ENCODE measurements at regions of chr13 and their contacts with region 1.

Region 1: DNA sequence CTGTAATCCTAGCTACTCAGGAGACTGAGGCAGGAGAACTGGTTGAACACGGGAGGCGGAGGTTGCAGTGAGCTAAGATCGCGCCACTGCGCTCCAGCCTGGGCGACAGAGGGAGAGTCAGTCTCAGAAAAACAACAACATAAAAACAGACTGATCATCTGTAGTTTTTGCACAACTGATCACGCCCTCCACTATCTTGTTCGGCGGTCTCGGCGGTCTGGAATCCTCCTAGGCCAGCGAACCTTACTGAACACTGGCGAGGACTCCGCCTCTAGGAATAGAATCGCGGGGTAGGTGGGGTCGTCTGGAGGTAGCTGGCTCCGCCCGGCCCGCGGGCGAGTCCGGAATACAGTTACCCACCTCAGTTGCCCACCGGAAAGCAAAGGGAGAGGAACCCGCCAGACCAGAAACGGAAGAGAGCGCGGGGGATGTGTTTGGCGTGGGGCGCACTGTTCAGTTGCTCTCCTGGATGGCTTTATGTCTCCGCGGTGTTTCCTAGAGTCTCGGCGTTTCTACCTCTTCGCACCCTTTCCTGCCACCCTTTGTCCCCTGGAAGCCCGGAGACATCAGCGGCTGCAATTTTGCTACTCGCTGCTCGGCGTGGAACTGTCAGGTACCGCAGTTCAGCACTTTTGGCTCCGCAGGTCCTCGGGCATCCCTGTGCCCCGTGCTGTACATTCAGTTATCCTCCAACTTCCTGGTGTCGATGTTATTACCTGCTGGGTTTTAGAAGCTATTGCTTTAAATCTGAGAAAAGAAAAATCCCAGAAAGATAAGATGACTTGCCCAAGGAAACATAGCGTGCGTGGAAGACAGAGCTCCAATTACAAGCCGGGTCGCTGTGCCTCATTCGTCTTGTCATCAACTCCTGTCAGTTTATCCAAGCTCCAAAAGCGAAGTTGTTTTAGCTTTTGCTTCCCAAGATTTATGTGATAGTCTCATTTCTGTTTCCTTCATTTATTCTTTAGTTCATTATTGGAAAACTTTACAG is 24.9 kb upstream of the HNRNPA1L2 start:
- DNase-seq: peak; percentile 89
- H3K4me3 ChIP-seq: peak overlapping the region; percentile 68
- H3K4me3 Mint-ChIP-seq: peak overlapping the region; percentile 100
- H3K27ac Mint-ChIP-seq: peak overlapping the region; percentile 87
- H3K4me1 ChIP-seq: no peaks in the 10 kb centered on the region
- H3K4me1 Mint-ChIP-seq: no peaks in the 10 kb centered on the region
- H3K27me3 ChIP-seq: no peaks in the 10 kb centered on the region
- H3K27me3 Mint-ChIP-seq: no peaks in the 10 kb centered on the region
- CTCF ChIP-seq: no peak

Region 2: DNA sequence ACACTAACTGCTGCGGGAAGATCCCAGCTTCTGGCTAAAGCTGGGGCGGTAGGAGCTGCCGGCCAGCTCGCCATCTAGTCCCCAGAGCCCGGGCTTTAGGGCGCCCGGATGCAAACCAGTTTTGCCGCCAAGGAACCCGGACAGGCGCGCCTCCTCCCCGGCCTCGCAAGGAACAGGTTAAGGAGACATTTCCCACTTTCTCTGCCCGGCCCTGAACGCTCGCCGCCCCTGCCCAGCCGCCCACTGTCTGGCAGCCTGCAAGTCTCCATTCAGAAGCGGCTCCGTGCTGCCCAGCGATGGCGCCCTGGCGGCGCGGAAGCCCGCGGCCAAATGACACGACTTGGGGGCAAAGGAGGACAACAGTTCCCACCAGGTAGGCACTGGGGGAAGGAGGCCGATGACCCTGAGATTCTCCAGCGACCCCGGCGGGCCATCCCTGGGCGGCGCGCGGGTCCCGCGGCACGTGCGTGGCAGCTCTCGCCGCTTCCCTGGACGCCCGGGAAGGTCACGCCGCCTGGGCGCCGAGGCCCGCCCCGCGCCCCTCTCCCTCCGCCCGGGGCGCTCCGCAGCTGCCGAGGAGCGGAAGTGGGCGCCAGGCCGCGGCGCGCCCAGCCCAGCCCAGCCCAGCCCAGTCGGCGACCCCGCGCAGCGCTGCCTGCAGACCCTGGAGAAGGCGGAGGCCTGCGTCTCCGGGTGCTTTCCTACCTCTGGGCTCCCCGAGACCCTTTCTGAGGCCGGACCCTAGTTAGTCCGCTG is 17.3 kb before region 1 on chr13:
- CTCF ChIA-PET with region 1: interaction called, 4 read pairs
- POLR2A ChIA-PET with region 1: interaction called, 4 read pairs
- intact Hi-C with region 1: loop called (anchors 1 kb)
- DNase-seq: peak; percentile 52 to 72
- H3K4me3 ChIP-seq: peak overlapping the region; percentile 87
- H3K4me3 Mint-ChIP-seq: peak overlapping the region; percentile 80
- H3K27ac Mint-ChIP-seq: peak overlapping the region; percentile 61
- H3K4me1 ChIP-seq: no peaks in the 10 kb centered on the region
- H3K4me1 Mint-ChIP-seq: peaks cover 7% of the 10 kb centered on the region
- H3K27me3 ChIP-seq: no peaks in the 10 kb centered on the region
- H3K27me3 Mint-ChIP-seq: no peaks in the 10 kb centered on the region
- CTCF ChIP-seq: no peak

Region 3: DNA sequence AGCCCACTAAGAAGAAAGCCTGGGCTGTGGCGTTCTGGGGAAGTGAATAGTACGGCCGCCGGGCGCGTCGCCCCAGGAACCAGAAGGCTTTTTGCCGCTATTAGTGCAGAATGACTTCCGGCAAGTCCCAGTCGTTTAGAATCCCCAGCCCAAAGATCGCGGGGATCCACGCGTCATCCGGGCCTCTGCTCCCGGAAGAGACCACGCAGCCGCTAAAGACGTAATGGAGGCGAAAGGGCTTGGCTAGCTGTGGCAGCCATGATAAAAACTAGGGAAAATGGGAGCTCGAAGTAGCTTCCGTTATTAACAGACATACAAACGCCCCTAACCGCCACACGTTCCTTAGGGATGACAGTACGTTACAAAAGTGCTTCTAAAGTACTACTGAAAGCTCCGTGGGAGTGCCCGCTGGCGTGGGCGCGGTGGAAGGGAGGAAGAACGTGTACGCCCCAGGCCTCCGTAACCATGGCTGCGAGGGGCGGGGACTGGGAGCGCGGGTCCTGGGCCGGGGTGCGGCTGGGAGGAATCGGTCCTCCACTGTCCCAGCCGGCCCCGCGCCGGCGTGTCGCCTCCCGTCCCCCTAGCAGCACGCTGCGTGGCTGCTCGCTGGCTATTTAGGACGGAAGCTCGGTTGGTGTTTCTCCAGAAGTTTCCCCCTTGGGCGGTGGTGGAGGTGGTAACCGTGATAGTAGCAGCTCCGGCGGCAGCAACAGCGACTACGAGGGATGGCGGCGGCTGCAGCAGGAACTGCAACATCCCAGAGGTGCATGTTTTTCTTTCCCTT is 35.0 kb after region 1 on chr13 and contains the start of gene SUGT1:
- CTCF ChIA-PET with region 1: interaction called, 12 read pairs
- POLR2A ChIA-PET with region 1: interaction called, 37 read pairs
- intact Hi-C with region 1: loop called (anchors 1 kb)
- DNase-seq: peak; percentile 98
- H3K4me3 ChIP-seq: peak within 1 kb of the TSS; percentile 53
- H3K4me3 Mint-ChIP-seq: no peak within 1 kb of the TSS
- H3K27ac Mint-ChIP-seq: no peak within 1 kb of the TSS
- H3K4me1 ChIP-seq: peaks cover 17% of the 10 kb centered on the region
- H3K4me1 Mint-ChIP-seq: no peaks in the 10 kb centered on the region
- H3K27me3 ChIP-seq: no peaks in the 10 kb centered on the region
- H3K27me3 Mint-ChIP-seq: no peaks in the 10 kb centered on the region
- CTCF ChIP-seq: peak; percentile 71 to 83
- total RNA-seq, gene SUGT1: 73.6 and 84.3 TPM in 2 replicates

Region 4: GRCh38 chr13:52850396-52851136 is 233.2 kb after region 1 on chr13:
- CTCF ChIA-PET with region 1: no interaction called
- POLR2A ChIA-PET with region 1: no interaction called
- intact Hi-C with region 1: loop called (anchors 2 kb)
- DNase-seq: peak; percentile 82 to 87
- H3K4me3 ChIP-seq: peak overlapping the region; percentile 74
- H3K4me3 Mint-ChIP-seq: peak overlapping the region; percentile 87
- H3K27ac Mint-ChIP-seq: peak overlapping the region; percentile 83
- H3K4me1 ChIP-seq: no peaks in the 10 kb centered on the region
- H3K4me1 Mint-ChIP-seq: no peaks in the 10 kb centered on the region
- H3K27me3 ChIP-seq: no peaks in the 10 kb centered on the region
- H3K27me3 Mint-ChIP-seq: peaks cover 9% of the 10 kb centered on the region
- CTCF ChIP-seq: no peak

Region 5: GRCh38 chr13:53014495-53015443 is 397.4 kb after region 1 on chr13:
- CTCF ChIA-PET with region 1: no interaction called
- POLR2A ChIA-PET with region 1: no interaction called
- intact Hi-C with region 1: no loop called
- DNase-seq: no peak
- H3K4me3 ChIP-seq: no peak overlapping the region
- H3K4me3 Mint-ChIP-seq: no peak overlapping the region
- H3K27ac Mint-ChIP-seq: no peak overlapping the region
- H3K4me1 ChIP-seq: no peaks in the 10 kb centered on the region
- H3K4me1 Mint-ChIP-seq: no peaks in the 10 kb centered on the region
- H3K27me3 ChIP-seq: no peaks in the 10 kb centered on the region; the same call in 1 of the 2 replicates
- H3K27me3 Mint-ChIP-seq: peaks cover 8% of the 10 kb centered on the region
- CTCF ChIP-seq: no peak

Measured in Caco-2 (cell line).